Cardiac septum (tissue), 1 donor: ENCODE measurements at regions of chr1 and their contacts with region 1.

Region 1: DNA sequence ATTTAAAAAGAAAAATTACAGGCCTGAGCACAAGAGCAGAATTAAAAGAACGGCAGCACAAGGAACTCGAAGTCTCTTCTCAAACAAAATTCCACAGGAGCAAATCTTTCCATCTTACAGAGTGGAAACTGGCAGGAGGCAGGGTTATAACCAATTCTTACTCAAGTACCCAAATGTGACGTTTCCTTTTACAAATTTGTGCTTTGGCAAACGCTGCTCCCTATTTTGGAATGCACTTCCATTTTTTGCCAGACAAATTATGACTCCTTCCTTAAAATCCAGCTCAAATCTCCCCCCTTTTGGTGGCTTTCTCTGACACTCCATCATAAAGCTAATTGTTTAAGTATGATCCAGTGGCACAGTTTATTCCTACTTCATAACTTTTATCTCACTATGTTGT is 7.8 kb downstream of the ERI3 start:
- DNase-seq: no peak

Region 2: GRCh38 chr1:44361478-44361877 is 14.2 kb after region 1 on chr1:
- intact Hi-C with region 1: no loop called
- DNase-seq: no peak

Region 3: GRCh38 chr1:44390277-44390676 is 43.0 kb after region 1 on chr1:
- intact Hi-C with region 1: loop called (anchors 5 kb)
- DNase-seq: no peak

Region 4: GRCh38 chr1:45134468-45134873 is 787.2 kb after region 1 on chr1:
- intact Hi-C with region 1: no loop called
- DNase-seq: no peak